Caco-2 (cell line): ENCODE measurements at regions of chr3 and their contacts with region 1.

Region 1: DNA sequence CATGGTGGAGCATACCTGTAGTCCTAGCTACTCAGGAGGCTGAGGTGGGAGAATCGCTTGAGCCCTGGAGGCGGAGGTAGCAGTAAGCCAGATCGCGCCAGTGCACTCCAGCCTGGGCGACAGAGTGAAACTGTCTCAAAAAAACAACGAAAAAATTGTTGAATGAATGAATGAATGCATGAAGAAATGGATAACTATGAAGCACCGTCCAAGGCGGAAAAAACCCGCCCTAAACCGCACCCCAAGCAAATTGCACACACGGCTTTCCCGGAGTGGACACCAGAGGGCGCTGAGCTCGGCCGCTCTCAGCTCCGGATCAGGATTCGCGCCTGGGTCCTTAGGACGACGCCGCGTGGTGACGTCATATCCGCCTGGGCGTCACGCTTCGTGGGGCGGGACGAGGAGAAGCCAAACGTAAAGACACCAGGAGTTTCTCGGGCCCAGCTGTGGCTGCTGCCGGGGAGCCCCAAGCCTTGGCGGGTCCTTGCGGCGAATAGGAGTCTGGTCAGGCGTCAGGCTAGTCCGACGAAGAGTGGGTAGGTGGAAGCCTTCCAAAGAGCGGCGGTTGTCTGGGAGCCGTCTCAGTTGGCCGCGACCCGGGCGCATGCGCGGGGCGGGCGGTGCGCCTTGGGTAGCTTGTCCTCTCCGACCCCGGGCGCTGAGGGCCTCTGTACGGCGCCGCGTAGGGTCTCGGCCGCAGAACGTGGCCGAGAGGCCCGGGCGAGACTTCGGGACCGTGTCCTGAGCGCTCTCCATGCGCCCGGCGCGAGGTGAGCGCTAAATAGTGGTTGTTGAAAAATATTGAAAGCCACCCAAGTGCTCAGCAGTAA is at the starts of genes HTD2 and RPP14:
- DNase-seq: peak; percentile 96 to 97
- H3K4me3 ChIP-seq: peak within 1 kb of the TSS; percentile 54
- H3K4me3 Mint-ChIP-seq: peak within 1 kb of the TSS; percentile 99
- H3K27ac Mint-ChIP-seq: peak within 1 kb of the TSS; percentile 99
- H3K4me1 ChIP-seq: 0 out of 2 replicates have a peak, but pooled peaks cover 10% of the 10 kb centered on the region
- H3K4me1 Mint-ChIP-seq: peaks cover 7% of the 10 kb centered on the region
- H3K27me3 ChIP-seq: no peaks in the 10 kb centered on the region
- H3K27me3 Mint-ChIP-seq: no peaks in the 10 kb centered on the region
- CTCF ChIP-seq: peak; percentile 74 to 92
- total RNA-seq, gene HTD2: 8.2 and 13.2 TPM in 2 replicates
- total RNA-seq, gene RPP14: 19.2 and 24.7 TPM in 2 replicates

Region 2: DNA sequence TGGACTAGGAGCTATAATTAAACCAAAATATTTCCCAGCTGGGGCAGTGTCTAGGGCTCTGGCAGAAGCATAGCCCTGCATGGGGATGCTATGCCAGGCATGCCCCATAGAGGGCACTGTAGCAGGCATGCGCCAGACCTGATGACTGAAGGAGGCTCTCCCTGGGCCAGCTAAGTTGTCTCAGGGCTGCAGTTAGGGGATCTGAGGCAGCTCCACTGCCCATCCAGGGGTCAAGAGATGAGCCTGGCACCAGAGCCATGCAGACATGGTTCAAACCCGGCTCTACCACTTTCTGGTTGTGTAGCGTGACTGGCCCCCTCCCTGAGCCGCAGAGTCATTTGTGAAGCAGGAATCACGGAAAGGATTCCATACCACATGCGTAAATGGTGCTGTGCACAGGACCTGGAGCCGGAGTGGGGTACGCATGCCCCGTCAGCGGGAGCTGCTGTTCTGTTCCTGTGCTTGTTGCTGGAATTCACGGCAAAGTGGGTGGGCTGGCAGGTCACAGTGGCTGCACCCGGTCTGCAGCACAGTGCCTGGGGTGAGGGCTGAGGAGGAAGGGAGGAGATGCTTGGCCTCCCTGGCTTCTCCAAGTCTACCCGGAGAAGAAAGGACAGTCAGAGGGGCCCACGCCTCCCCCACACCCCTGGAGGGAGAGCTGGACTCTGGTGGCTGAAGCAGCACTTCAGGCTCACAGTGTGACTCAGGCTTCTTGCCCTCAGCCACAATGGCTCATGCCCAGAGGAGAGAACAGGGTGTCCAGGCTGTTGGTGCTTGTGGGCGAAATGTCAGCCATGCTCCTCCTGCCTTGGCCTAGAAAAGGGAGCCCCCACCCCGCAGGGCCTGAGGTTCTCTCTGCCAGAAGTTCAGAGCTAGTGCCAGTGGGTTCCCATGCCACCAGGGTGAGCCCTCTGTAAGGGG is 138.4 kb before region 1 on chr3:
- CTCF ChIA-PET with region 1: interaction called, 11 read pairs
- POLR2A ChIA-PET with region 1: no interaction called
- intact Hi-C with region 1: no loop called
- DNase-seq: peak; percentile 65 to 78
- H3K4me3 ChIP-seq: no peak overlapping the region
- H3K4me3 Mint-ChIP-seq: no peak overlapping the region
- H3K27ac Mint-ChIP-seq: peak overlapping the region; percentile 68
- H3K4me1 ChIP-seq: peaks cover 52% of the 10 kb centered on the region
- H3K4me1 Mint-ChIP-seq: peaks cover 48% of the 10 kb centered on the region
- H3K27me3 ChIP-seq: no peaks in the 10 kb centered on the region
- H3K27me3 Mint-ChIP-seq: no peaks in the 10 kb centered on the region
- CTCF ChIP-seq: peak; percentile 75 to 76

Region 3: DNA sequence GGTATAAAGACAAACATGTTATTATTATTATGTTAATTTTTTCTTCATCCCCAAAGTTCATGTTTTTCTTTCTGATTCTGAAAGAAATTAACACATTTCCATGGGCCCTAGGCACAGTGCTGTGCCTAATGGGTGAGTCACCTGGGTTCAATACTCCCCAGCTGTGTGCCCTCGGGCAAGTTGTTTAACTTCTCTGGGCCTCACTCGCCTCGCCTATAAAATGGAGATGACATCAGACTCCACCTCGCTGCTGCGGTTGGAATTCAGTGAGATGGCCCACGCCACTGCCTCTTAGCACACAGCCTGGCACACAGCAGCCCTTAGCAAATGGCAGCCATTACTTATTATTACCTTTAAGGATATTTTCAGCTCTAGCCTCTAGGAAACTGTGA is 117.9 kb before region 1 on chr3:
- CTCF ChIA-PET with region 1: interaction called, 34 read pairs
- POLR2A ChIA-PET with region 1: interaction called, 4 read pairs
- intact Hi-C with region 1: no loop called
- DNase-seq: no peak
- H3K4me3 ChIP-seq: no peak overlapping the region
- H3K4me3 Mint-ChIP-seq: no peak overlapping the region
- H3K27ac Mint-ChIP-seq: no peak overlapping the region
- H3K4me1 ChIP-seq: peaks cover 8% of the 10 kb centered on the region
- H3K4me1 Mint-ChIP-seq: peaks cover 11% of the 10 kb centered on the region
- H3K27me3 ChIP-seq: no peaks in the 10 kb centered on the region
- H3K27me3 Mint-ChIP-seq: no peaks in the 10 kb centered on the region
- CTCF ChIP-seq: no peak

Region 4: GRCh38 chr3:58217209-58217811 is 88.8 kb before region 1 on chr3:
- CTCF ChIA-PET with region 1: interaction called, 11 read pairs
- POLR2A ChIA-PET with region 1: no interaction called
- intact Hi-C with region 1: no loop called
- DNase-seq: peak; percentile 69 to 73
- H3K4me3 ChIP-seq: no peak overlapping the region
- H3K4me3 Mint-ChIP-seq: no peak overlapping the region
- H3K27ac Mint-ChIP-seq: no peak overlapping the region
- H3K4me1 ChIP-seq: peaks cover 25% of the 10 kb centered on the region
- H3K4me1 Mint-ChIP-seq: peaks cover 27% of the 10 kb centered on the region
- H3K27me3 ChIP-seq: no peaks in the 10 kb centered on the region
- H3K27me3 Mint-ChIP-seq: no peaks in the 10 kb centered on the region
- CTCF ChIP-seq: peak; percentile 61 to 75

Region 5: DNA sequence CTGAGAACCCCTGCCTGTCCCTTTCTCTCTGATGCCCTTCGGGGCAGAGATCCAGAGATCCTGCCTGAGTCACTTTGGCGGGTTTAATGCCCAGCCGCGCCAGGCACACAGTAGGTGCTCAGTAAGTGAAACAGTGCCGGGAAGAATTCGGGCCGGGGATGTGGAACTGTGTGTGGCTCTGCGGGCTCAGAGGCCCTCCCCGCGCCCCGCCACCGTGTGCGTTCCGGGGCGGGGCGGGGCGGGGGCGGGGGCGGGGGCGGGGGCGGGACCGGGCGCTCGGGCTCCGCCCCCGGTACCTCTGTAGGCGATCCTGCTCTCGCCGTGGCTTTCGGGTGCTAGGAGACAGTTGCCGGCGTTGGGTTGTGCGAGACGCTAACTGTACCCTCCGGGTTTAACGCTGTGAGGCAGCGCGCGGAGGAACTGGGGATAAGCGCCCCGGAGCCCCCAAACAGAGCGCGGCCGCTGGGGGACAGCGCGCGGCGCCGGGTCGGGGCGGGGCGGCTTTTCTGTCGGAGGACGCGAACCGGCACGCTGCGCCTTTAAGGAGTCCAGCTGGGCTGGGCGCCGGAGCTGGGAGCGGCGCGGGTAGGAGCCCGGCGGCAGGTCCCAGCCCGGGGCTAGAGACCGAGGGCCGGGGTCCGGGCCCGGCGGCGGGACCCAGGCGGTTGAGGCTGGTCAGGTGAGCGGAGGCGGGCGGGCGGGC is 68.7 kb before region 1 on chr3 and contains the start of gene ABHD6:
- CTCF ChIA-PET with region 1: interaction called, 9 read pairs
- POLR2A ChIA-PET with region 1: interaction called, 3 read pairs
- intact Hi-C with region 1: loop called (anchors 2 kb)
- DNase-seq: peak; percentile 72 to 90
- H3K4me3 ChIP-seq: peak within 1 kb of the TSS; percentile 75
- H3K4me3 Mint-ChIP-seq: peak within 1 kb of the TSS; percentile 98
- H3K27ac Mint-ChIP-seq: peak within 1 kb of the TSS; percentile 56
- H3K4me1 ChIP-seq: peaks cover 10% of the 10 kb centered on the region
- H3K4me1 Mint-ChIP-seq: peaks cover 6% of the 10 kb centered on the region
- H3K27me3 ChIP-seq: no peaks in the 10 kb centered on the region
- H3K27me3 Mint-ChIP-seq: no peaks in the 10 kb centered on the region
- CTCF ChIP-seq: peak in 1 of 2 experiments; percentile 22
- total RNA-seq, gene ABHD6: 15.4 and 16.1 TPM in 2 replicates

Region 6: GRCh38 chr3:58249358-58250092 is 56.6 kb before region 1 on chr3:
- CTCF ChIA-PET with region 1: no interaction called
- POLR2A ChIA-PET with region 1: interaction called, 6 read pairs
- intact Hi-C with region 1: loop called (anchors 2 kb)
- DNase-seq: peak; percentile 65 to 74
- H3K4me3 ChIP-seq: no peak overlapping the region
- H3K4me3 Mint-ChIP-seq: peak overlapping the region; percentile 61
- H3K27ac Mint-ChIP-seq: peak overlapping the region; percentile 89
- H3K4me1 ChIP-seq: peaks cover 39% of the 10 kb centered on the region
- H3K4me1 Mint-ChIP-seq: peaks cover 40% of the 10 kb centered on the region
- H3K27me3 ChIP-seq: no peaks in the 10 kb centered on the region
- H3K27me3 Mint-ChIP-seq: no peaks in the 10 kb centered on the region
- CTCF ChIP-seq: peak; percentile 17 to 33

Region 7: GRCh38 chr3:58332575-58333188 is 26.6 kb after region 1 on chr3 and contains the start of gene PXK:
- CTCF ChIA-PET with region 1: interaction called, 11 read pairs
- POLR2A ChIA-PET with region 1: no interaction called
- intact Hi-C with region 1: no loop called
- DNase-seq: peak; percentile 63 to 83
- H3K4me3 ChIP-seq: peak within 1 kb of the TSS; percentile 73
- H3K4me3 Mint-ChIP-seq: peak within 1 kb of the TSS; percentile 89
- H3K27ac Mint-ChIP-seq: peak within 1 kb of the TSS; percentile 66
- H3K4me1 ChIP-seq: no peaks in the 10 kb centered on the region
- H3K4me1 Mint-ChIP-seq: peaks cover 13% of the 10 kb centered on the region
- H3K27me3 ChIP-seq: no peaks in the 10 kb centered on the region; the same call in 1 of the 2 replicates
- H3K27me3 Mint-ChIP-seq: no peaks in the 10 kb centered on the region
- CTCF ChIP-seq: no peak
- total RNA-seq, gene PXK: 8.8 and 9.1 TPM in 2 replicates

Region 8: DNA sequence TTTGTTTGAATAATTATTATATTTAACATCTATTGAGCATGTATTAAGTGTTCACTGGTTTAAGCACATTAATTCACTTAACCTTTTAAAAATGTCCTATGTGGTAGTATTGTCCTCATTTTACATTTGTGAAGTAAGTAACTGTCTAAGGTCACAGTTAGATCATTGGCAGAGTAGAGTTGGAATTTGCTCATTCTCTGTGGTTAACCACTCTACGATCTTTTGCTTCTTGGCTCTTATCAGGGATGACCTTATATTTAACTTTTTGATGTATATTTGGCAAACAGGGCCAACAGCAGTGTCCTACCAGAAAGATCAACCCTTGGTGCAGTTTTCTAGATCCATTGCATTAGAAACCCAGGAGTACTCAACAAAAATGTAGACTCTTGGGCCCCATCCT is 60.6 kb after region 1 on chr3:
- CTCF ChIA-PET with region 1: no interaction called
- POLR2A ChIA-PET with region 1: no interaction called
- intact Hi-C with region 1: no loop called
- DNase-seq: no peak
- H3K4me3 ChIP-seq: no peak overlapping the region
- H3K4me3 Mint-ChIP-seq: no peak overlapping the region
- H3K27ac Mint-ChIP-seq: no peak overlapping the region
- H3K4me1 ChIP-seq: no peaks in the 10 kb centered on the region
- H3K4me1 Mint-ChIP-seq: no peaks in the 10 kb centered on the region
- H3K27me3 ChIP-seq: no peaks in the 10 kb centered on the region
- H3K27me3 Mint-ChIP-seq: no peaks in the 10 kb centered on the region
- CTCF ChIP-seq: no peak